ENCODE measurements at regions of chr11 and their contacts with region 1.

Region 1: GRCh38 chr11:18105802-18106574 is at the start of gene SAAL1:
- DNase-seq: peak; percentile 82
- H3K4me3 Mint-ChIP-seq: peak within 1 kb of the TSS; percentile 94
- H3K27ac Mint-ChIP-seq: peak within 1 kb of the TSS; percentile 87
- H3K4me1 Mint-ChIP-seq: peaks cover 19% of the 10 kb centered on the region
- H3K27me3 Mint-ChIP-seq: peaks cover 16% of the 10 kb centered on the region
- CTCF ChIP-seq: peak; percentile 68
- total RNA-seq, gene SAAL1: 21.6 and 34.3 TPM in 2 replicates

Region 2: DNA sequence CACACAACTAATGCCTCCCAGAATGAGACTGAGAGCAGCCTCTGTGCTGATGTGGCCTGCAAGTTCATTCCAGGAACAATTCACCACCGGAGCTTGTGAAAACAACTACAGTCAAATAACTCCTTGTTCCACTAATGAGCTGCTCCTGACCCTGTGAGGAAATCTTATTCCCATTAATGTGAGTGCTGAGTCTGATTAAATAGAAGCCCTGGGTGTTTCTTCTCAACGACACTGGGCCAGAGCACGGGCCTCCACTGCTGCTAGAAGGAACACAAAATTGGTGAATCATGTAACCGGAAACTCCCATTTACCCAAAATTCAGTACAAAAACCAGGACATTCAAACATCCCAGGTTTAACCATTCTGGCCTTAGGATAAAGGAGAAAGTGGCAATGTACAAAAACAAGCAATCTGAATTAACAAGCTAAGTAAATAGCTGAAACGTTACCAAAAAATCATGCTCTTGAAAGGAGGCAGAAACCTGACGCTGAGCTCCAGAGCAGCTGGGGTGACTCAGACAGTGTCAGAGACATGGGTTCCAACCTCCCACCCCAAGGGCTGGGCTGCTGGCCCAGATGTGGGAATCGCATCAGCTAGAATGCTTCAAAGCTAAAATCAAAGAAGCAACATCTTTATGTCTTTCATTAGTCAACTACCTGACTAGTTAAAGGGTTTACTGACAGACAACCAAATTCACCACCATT is 119.8 kb before region 1 on chr11:
- CTCF ChIA-PET with region 1: interaction called, 14 read pairs
- POLR2A ChIA-PET with region 1: interaction called, 4 read pairs
- intact Hi-C with region 1: loop called (anchors 2 kb)
- DNase-seq: peak; percentile 78
- H3K4me3 Mint-ChIP-seq: no peak overlapping the region
- H3K27ac Mint-ChIP-seq: peak overlapping the region; percentile 16
- H3K4me1 Mint-ChIP-seq: peaks cover 17% of the 10 kb centered on the region
- H3K27me3 Mint-ChIP-seq: no peaks in the 10 kb centered on the region
- CTCF ChIP-seq: no peak

Region 3: DNA sequence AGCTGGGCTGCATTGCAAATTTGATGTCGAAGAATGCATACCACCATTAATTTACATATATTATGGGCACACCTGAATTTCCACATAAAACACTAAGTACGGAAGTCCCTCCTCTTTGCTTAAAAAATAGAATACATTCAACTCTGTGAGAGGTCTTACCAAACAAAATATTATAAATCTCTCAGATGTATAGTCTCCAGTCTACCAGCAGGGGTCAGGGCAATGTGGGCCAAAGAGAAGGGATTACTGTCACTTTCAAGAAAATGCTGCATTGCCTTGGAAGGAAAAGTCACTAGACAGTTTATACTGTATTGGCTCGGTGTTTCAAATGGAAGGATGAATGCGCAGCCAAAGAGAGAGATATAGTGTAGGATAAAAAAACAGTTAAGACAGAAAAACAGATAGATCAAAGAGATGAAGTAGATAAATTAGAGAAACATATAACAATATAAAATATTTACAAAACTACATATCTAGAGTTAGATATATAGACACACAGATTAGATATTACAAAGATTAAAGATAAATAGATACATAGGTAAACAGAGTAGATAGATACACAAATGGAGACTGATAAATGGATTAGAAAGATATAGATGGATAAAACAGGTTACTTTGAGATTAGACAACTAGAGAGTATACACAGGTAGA is 114.1 kb before region 1 on chr11:
- CTCF ChIA-PET with region 1: interaction called, 14 read pairs
- POLR2A ChIA-PET with region 1: interaction called, 3 read pairs
- intact Hi-C with region 1: loop called (anchors 1 kb)
- DNase-seq: peak; percentile 73
- H3K4me3 Mint-ChIP-seq: no peak overlapping the region
- H3K27ac Mint-ChIP-seq: no peak overlapping the region
- H3K4me1 Mint-ChIP-seq: peaks cover 17% of the 10 kb centered on the region
- H3K27me3 Mint-ChIP-seq: no peaks in the 10 kb centered on the region
- CTCF ChIP-seq: peak; percentile 67

Region 4: GRCh38 chr11:18012863-18013781 is 92.9 kb before region 1 on chr11 and contains the start of gene SERGEF:
- CTCF ChIA-PET with region 1: interaction called, 4 read pairs
- POLR2A ChIA-PET with region 1: interaction called, 4 read pairs
- intact Hi-C with region 1: loop called (anchors 5 kb)
- DNase-seq: peak; percentile 89
- H3K4me3 Mint-ChIP-seq: peak within 1 kb of the TSS; percentile 77
- H3K27ac Mint-ChIP-seq: peak within 1 kb of the TSS; percentile 32
- H3K4me1 Mint-ChIP-seq: peaks cover 11% of the 10 kb centered on the region
- H3K27me3 Mint-ChIP-seq: no peaks in the 10 kb centered on the region
- CTCF ChIP-seq: peak; percentile 23
- total RNA-seq, gene SERGEF: 23.4 and 26.1 TPM in 2 replicates

Region 5: GRCh38 chr11:18088966-18089365 is 17.0 kb before region 1 on chr11:
- CTCF ChIA-PET with region 1: interaction called, 15 read pairs
- POLR2A ChIA-PET with region 1: interaction called, 4 read pairs
- intact Hi-C with region 1: no loop called
- DNase-seq: no peak
- H3K4me3 Mint-ChIP-seq: no peak overlapping the region
- H3K27ac Mint-ChIP-seq: no peak overlapping the region
- H3K4me1 Mint-ChIP-seq: no peaks in the 10 kb centered on the region
- H3K27me3 Mint-ChIP-seq: no peaks in the 10 kb centered on the region
- CTCF ChIP-seq: no peak

Region 6: GRCh38 chr11:18310800-18311340 is 204.9 kb after region 1 on chr11:
- CTCF ChIA-PET with region 1: no interaction called
- POLR2A ChIA-PET with region 1: interaction called, 4 read pairs
- intact Hi-C with region 1: loop called (anchors 5 kb)
- DNase-seq: peak; percentile 88
- H3K4me3 Mint-ChIP-seq: peak overlapping the region; percentile 60
- H3K27ac Mint-ChIP-seq: peak overlapping the region; percentile 96
- H3K4me1 Mint-ChIP-seq: peaks cover 63% of the 10 kb centered on the region
- H3K27me3 Mint-ChIP-seq: no peaks in the 10 kb centered on the region
- CTCF ChIP-seq: no peak